Heart left ventricle (tissue), 16 donors: ENCODE measurements at regions of chr17 and their contacts with region 1.

Region 1: GRCh38 chr17:17884391-17885357 is 47.9 kb upstream of the SREBF1 start:
- DNase-seq: no peak
- ATAC-seq: no peak
- H3K4me3 ChIP-seq: no peak overlapping the region
- H3K27ac ChIP-seq: no peak overlapping the region
- H3K4me1 ChIP-seq: peaks cover 4 to 38% (median 21%) of the 10 kb centered on the region in 12 donors
- H3K27me3 ChIP-seq: no peaks in the 10 kb centered on the region
- CTCF ChIP-seq: no peak
- POLR2A ChIP-seq: no peak

Region 2: GRCh38 chr17:18009609-18010420 is 125.1 kb after region 1 on chr17:
- intact Hi-C with region 1: loop called in 1 of 10 experiments (anchors 5 kb)
- DNase-seq: peak in 3 of 5 donors; percentile 43 to 68 (median 45)
- ATAC-seq: peak; percentile 78 to 88 (median 86)
- H3K4me3 ChIP-seq: no peak overlapping the region
- H3K27ac ChIP-seq: peak overlapping the region in 5 of 12 donors; percentile 16 to 45 (median 23)
- H3K4me1 ChIP-seq: peaks cover 0 to 24% (median 0%) of the 10 kb centered on the region in 12 donors
- H3K27me3 ChIP-seq: no peaks in the 10 kb centered on the region
- CTCF ChIP-seq: no peak
- POLR2A ChIP-seq: no peak